ENCODE measurements at regions of chr19 and their contacts with region 1.

Region 1: DNA sequence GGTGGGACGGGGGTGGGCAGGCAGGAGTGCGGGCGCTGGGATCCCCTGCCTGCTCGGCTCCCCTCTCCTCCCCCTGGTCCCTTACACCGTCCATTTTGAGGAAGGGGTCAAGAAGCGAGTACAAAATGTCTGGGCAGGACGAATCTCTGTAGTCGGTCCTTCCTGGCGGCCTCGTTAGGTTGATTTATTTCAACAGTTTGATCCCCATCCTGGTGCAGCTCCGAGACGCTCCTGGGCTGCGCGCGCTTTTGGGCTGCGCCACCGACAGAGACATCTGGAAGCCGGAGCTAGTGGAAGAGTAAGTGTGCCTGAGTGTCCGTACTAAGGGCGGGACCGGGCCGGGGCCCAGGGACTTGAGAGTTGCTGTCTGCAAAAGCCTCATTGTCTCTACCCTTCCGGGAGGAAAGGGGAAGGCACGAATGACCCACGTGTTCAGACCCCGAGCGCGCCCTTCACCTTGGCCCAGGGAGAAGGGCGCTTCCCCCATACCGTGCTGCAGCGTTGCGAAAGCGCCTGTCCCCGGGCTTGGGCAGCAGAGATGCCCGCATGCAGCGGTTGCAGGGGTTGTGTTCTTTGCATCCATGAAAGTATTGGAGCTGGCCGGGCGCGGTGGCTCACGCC is 1.8 kb downstream of the ZNF114 start:
- DNase-seq: no peak
- H3K4me3 ChIP-seq: peak overlapping the region; percentile 3 to 44 (median 38)
- H3K27ac ChIP-seq: no peak overlapping the region
- H3K4me1 ChIP-seq: peaks cover 0 to 15% (median 14%) of the 10 kb centered on the region in 4 donors
- H3K27me3 ChIP-seq: peaks cover 0 to 39% (median 22%) of the 10 kb centered on the region in 3 donors
- CTCF ChIP-seq: no peak
- EP300 ChIP-seq: no peak
- POLR2A ChIP-seq: no peak

Region 2: GRCh38 chr19:48290771-48291488 is 19.3 kb after region 1 on chr19:
- intact Hi-C with region 1: loop called (anchors 1 kb)
- DNase-seq: peak; percentile 90
- H3K4me3 ChIP-seq: peak overlapping the region; percentile 12 to 49 (median 40)
- H3K27ac ChIP-seq: peak overlapping the region in 2 of 4 donors; percentile 35 to 41
- H3K4me1 ChIP-seq: peaks cover 0 to 16% (median 11%) of the 10 kb centered on the region in 4 donors
- H3K27me3 ChIP-seq: peaks cover 0 to 15% (median 7%) of the 10 kb centered on the region in 3 donors
- CTCF ChIP-seq: peak; percentile 75 to 97 (median 92)
- EP300 ChIP-seq: no peak
- POLR2A ChIP-seq: no peak